ENCODE measurements at regions of chr11 and their contacts with region 1.

Region 1: DNA sequence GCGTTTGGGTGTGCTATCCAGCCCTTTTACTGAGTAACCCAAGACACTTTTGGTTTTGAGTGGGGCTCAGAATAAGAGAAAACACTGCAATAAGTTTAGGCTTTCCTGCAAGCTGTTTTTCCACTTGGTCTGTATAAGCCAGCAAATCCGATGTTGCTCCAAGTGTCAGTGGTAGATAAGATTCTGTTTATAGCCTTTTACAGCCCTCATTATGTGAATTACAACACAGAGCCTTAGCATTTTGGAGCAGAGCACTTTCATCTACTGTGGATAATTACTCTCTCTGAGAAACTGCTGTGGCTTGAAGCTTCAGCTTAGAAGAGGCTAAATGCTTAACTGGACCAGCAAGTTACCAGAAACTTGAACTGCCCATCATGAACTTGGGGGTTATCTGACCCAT is 601.1 kb downstream of the JRKL start:
- DNase-seq: no peak
- H3K4me3 ChIP-seq: no peak overlapping the region
- H3K4me3 Mint-ChIP-seq: no peak overlapping the region
- H3K27ac Mint-ChIP-seq: no peak overlapping the region
- H3K4me1 ChIP-seq: no peaks in the 10 kb centered on the region; the same call in 1 of the 2 replicates
- H3K4me1 Mint-ChIP-seq: no peaks in the 10 kb centered on the region
- H3K27me3 ChIP-seq: no peaks in the 10 kb centered on the region
- H3K27me3 Mint-ChIP-seq: no peaks in the 10 kb centered on the region
- CTCF ChIP-seq: no peak

Region 2: DNA sequence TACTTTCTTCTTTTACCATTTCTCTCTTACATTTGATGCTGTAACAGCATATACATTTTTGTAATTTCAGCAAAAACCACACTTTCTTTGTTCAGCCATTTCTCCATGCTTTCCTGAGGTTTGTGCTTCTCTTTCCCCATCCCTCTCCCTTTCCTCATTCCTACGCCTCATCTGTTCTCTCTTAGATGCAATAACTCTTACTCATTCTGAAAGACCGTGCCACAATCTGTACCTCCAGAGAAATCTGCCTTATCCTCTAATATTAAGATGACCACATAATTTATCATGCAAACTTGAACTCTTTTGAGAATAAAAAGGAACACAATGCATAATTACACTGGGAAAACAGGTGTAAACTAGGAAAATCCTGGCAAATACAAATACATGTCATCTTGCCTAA is 12.2 kb before region 1 on chr11:
- CTCF ChIA-PET with region 1: no interaction called
- POLR2A ChIA-PET with region 1: no interaction called
- intact Hi-C with region 1: loop called (anchors 1 kb)
- DNase-seq: no peak
- H3K4me3 ChIP-seq: no peak overlapping the region
- H3K4me3 Mint-ChIP-seq: no peak overlapping the region
- H3K27ac Mint-ChIP-seq: no peak overlapping the region
- H3K4me1 ChIP-seq: no peaks in the 10 kb centered on the region
- H3K4me1 Mint-ChIP-seq: no peaks in the 10 kb centered on the region
- H3K27me3 ChIP-seq: no peaks in the 10 kb centered on the region
- H3K27me3 Mint-ChIP-seq: peaks cover 8% of the 10 kb centered on the region
- CTCF ChIP-seq: no peak